ENCODE measurements at regions of chr22 and their contacts with region 1.

Region 1: GRCh38 chr22:18077639-18078328 is at the start of gene PEX26:
- DNase-seq: peak; percentile 85 to 96 (median 95)
- ATAC-seq: peak; percentile 99
- H3K4me3 ChIP-seq: peak within 1 kb of the TSS; percentile 96
- H3K4me3 Mint-ChIP-seq: peak within 1 kb of the TSS; percentile 94 to 100 (median 97)
- H3K27ac ChIP-seq: peak within 1 kb of the TSS; percentile 80
- H3K27ac Mint-ChIP-seq: peak within 1 kb of the TSS; percentile 93 to 99 (median 98)
- H3K4me1 ChIP-seq: peaks cover 19 to 27% of the 10 kb centered on the region in 2 donors
- H3K4me1 Mint-ChIP-seq: peaks cover 22 to 66% (median 61%) of the 10 kb centered on the region in 7 donors
- H3K27me3 ChIP-seq: no peaks in the 10 kb centered on the region
- H3K27me3 Mint-ChIP-seq: no peaks in the 10 kb centered on the region
- total RNA-seq, gene PEX26: 30.1 to 42.8 (median 35.5) TPM

Region 2: GRCh38 chr22:17084554-17085276 is 993.1 kb before region 1 on chr22 and contains the start of gene IL17RA:
- CTCF ChIA-PET with region 1: no interaction called
- POLR2A ChIA-PET with region 1: no interaction called
- intact Hi-C with region 1: loop called in 1 of 2 experiments (anchors 2 kb)
- DNase-seq: peak; percentile 90 to 97 (median 94)
- ATAC-seq: peak; percentile 97
- H3K4me3 ChIP-seq: peak within 1 kb of the TSS; percentile 59
- H3K4me3 Mint-ChIP-seq: peak within 1 kb of the TSS; percentile 87 to 99 (median 97)
- H3K27ac ChIP-seq: peak within 1 kb of the TSS; percentile 89
- H3K27ac Mint-ChIP-seq: peak within 1 kb of the TSS; percentile 88 to 98 (median 94)
- H3K4me1 ChIP-seq: peaks cover 28 to 41% of the 10 kb centered on the region in 2 donors
- H3K4me1 Mint-ChIP-seq: peaks cover 24 to 49% (median 36%) of the 10 kb centered on the region in 7 donors
- H3K27me3 ChIP-seq: no peaks in the 10 kb centered on the region
- H3K27me3 Mint-ChIP-seq: peaks cover 0 to 8% (median 0%) of the 10 kb centered on the region in 5 donors
- total RNA-seq, gene IL17RA: 51.9 to 91.8 (median 76.5) TPM

Region 3: DNA sequence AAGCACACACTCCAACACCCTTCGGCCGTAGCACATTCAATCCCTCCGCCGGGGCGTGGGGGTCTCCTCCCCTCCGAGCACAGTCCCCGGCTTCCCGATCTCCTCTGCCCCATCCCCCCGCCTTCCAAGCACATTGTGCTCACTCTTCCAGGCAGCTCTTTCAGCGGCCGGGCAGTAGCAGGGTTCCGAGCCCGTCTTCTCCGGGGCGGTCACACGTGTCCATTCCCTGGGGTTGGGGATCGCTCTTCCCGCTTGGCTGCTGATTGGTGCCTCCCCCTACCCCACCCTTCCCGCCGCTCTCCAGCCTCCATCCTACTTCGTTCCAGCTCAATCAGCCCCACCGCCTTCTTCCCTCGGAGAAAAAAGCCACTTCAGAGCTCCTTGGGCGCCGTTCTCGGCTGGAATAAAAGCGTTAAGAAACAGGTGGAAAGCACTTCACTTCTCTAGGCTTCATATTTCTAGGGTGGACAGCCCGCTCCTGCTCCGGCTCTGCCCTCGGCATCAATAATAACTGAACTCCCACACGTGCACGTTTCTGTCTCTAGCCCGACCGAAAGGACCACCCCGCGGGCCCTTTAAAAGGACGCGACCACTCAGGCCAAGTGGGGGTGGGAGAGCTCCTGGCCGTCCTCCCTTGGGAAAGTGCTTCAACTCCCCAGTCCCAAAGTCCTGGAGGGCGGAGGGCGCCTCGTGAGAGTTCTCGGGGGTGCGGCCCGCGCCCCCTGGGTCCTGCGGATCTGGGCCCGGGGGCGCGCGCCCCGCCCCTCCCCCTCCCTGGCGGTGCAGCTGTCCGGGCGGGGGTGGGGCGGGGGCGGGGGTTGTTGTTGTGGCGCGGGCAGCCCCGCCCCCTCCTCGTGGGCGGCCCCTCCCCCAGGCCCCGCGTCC is 709.0 kb before region 1 on chr22:
- CTCF ChIA-PET with region 1: no interaction called
- POLR2A ChIA-PET with region 1: no interaction called
- intact Hi-C with region 1: loop called in 1 of 2 experiments (anchors 5 kb)
- DNase-seq: peak in 3 of 9 donors; percentile 9 to 26 (median 16)
- ATAC-seq: peak; percentile 6
- H3K4me3 ChIP-seq: no peak overlapping the region
- H3K4me3 Mint-ChIP-seq: peak overlapping the region; percentile 75 to 86 (median 81)
- H3K27ac ChIP-seq: no peak overlapping the region
- H3K27ac Mint-ChIP-seq: peak overlapping the region in 2 of 9 donors; percentile 38 to 55
- H3K4me1 ChIP-seq: peaks cover 0 to 14% of the 10 kb centered on the region in 2 donors
- H3K4me1 Mint-ChIP-seq: peaks cover 13 to 35% (median 28%) of the 10 kb centered on the region in 7 donors
- H3K27me3 ChIP-seq: peaks cover 0 to 16% of the 10 kb centered on the region in 2 donors
- H3K27me3 Mint-ChIP-seq: peaks cover 53 to 68% (median 54%) of the 10 kb centered on the region in 5 donors

Region 4: GRCh38 chr22:17742527-17742902 is 335.3 kb before region 1 on chr22:
- CTCF ChIA-PET with region 1: interaction called, 15 read pairs
- POLR2A ChIA-PET with region 1: interaction called, 4 read pairs
- intact Hi-C with region 1: loop called (anchors 1 to 5 kb)
- DNase-seq: peak; percentile 32 to 72 (median 53)
- ATAC-seq: peak; percentile 86
- H3K4me3 ChIP-seq: no peak overlapping the region
- H3K4me3 Mint-ChIP-seq: no peak overlapping the region
- H3K27ac ChIP-seq: no peak overlapping the region
- H3K27ac Mint-ChIP-seq: peak overlapping the region in 3 of 9 donors; percentile 8 to 67 (median 9)
- H3K4me1 ChIP-seq: no peaks in the 10 kb centered on the region
- H3K4me1 Mint-ChIP-seq: peaks cover 3 to 11% (median 7%) of the 10 kb centered on the region in 7 donors
- H3K27me3 ChIP-seq: no peaks in the 10 kb centered on the region
- H3K27me3 Mint-ChIP-seq: no peaks in the 10 kb centered on the region

Region 5: DNA sequence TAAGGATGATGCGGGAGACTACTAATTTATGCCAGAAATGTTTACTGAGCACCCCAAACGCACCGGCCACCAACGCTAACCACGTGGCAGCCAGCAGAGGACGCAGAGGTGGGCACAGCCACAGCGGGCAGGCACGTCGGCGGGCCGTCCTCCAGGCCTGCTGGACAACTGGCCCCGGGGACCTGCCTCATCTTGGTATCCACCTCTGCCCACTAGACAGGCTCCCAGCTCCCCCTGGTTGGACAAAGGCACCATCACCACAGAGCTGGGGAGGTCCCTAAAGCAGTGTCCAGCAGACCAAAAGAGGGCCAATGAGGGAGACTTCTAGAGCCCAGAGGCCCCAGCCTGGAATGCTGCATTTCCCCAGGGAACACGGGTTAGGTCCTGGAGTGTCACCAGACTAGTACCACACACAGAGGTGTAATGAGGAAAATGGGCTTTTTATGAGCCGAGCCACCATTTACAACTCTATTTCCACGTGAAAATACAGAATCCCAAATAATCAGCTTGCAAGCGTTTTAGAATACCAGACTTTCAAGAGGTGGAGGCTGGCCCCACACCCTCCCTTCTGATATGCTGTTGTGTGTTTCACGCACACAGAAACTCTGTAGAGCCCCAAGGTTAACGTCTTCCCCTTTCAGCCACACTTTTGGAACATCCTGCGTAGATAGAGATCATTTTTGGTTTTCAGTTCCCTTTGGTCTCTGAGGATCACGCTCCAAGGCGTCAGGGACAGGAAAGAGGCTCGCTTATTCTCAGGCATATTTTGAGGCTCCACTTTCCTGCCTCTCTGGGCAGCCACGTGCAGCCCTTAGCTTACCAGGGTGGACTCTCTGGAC is 279.8 kb before region 1 on chr22:
- CTCF ChIA-PET with region 1: no interaction called
- POLR2A ChIA-PET with region 1: no interaction called
- intact Hi-C with region 1: no loop called
- DNase-seq: no peak
- ATAC-seq: peak; percentile 72
- H3K4me3 ChIP-seq: no peak overlapping the region
- H3K4me3 Mint-ChIP-seq: no peak overlapping the region
- H3K27ac ChIP-seq: no peak overlapping the region
- H3K27ac Mint-ChIP-seq: no peak overlapping the region
- H3K4me1 ChIP-seq: no peaks in the 10 kb centered on the region
- H3K4me1 Mint-ChIP-seq: peaks cover 0 to 5% (median 4%) of the 10 kb centered on the region in 7 donors
- H3K27me3 ChIP-seq: no peaks in the 10 kb centered on the region
- H3K27me3 Mint-ChIP-seq: no peaks in the 10 kb centered on the region

Region 6: DNA sequence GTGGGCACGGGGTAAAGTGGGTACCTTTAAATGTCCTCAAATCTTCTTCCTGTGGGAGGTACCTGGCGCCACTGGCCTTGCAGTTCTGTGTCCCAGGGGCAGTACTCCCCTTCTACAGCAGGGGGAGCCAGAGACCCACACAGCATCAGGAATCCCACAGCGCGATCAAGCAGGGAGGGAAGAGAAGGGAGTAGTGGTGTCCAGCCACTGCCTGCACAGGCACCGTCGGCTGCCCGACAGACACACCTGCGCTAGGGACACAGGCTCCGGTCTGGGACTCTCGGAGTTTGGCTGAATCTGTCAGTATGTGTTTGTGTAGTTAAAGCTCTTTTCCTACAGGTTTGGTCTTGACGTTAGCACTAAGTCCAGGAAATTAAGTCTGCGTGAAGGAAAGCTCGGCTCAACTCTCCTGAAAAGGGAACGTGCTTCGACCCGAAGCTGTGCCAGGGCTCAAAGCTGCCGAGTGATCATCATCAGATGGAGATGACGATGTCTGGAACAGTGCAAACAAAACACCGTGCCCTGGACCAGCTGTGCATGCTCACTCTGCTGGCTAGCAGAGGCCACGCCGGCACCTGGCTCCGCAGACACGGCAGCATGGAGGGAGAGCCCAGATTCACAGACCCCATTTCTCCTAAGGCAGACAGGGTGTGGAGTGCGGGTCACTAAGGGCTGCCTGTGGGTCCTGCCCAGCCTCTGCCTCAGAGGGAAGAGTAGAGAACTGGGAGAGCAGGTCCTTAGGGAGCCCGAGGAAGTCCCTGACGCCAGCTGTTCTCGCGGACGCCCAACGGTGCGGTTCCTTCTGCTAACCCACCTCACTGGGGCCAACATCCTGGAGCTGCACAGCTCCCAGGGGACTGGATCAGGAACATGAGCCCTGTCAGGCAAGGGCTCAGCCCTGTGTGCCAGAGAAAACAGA is 247.5 kb before region 1 on chr22:
- CTCF ChIA-PET with region 1: interaction called, 87 read pairs
- POLR2A ChIA-PET with region 1: interaction called, 18 read pairs
- intact Hi-C with region 1: loop called in 1 of 2 experiments (anchors 1 kb)
- DNase-seq: peak; percentile 59 to 87 (median 78)
- ATAC-seq: peak; percentile 94
- H3K4me3 ChIP-seq: no peak overlapping the region
- H3K4me3 Mint-ChIP-seq: no peak overlapping the region
- H3K27ac ChIP-seq: no peak overlapping the region
- H3K27ac Mint-ChIP-seq: peak overlapping the region in 2 of 9 donors; percentile 28 to 65
- H3K4me1 ChIP-seq: peaks cover 0 to 6% of the 10 kb centered on the region in 2 donors
- H3K4me1 Mint-ChIP-seq: peaks cover 0 to 10% (median 8%) of the 10 kb centered on the region in 7 donors
- H3K27me3 ChIP-seq: no peaks in the 10 kb centered on the region
- H3K27me3 Mint-ChIP-seq: no peaks in the 10 kb centered on the region

Region 7: DNA sequence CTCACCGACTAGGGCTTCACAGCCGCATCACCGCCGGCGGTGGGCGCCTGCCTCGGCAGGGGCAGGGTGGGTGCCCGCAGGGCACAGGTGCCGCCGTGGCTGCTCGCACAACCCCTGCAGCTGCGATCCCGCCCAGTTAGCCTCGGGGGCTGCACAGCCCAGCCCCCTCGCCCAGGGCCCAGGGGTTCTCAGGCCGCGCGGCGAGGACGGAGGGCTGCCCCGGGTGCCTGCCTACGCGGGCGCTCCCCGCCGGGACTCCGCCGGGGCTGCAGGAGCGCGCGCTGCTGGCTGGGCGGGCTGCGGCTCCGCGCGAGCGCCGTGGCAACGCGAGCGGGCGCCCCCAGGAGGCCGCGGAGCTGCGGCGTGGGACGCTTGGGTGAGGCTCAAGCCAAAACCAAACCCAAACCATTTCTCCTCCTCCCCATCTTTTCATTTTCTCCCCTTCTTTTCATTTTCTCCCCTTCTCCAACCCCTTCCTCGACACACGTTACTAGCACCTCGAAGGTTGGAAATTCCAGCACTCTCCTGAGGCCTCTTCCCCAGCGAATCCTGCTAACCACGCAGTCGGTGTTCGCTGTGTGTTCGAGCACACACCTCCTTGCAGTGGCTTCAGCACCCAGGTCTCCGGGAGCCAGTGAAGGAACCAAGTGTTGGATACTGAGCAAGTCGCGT is 53.4 kb before region 1 on chr22 and contains the start of gene MICAL3:
- CTCF ChIA-PET with region 1: no interaction called
- POLR2A ChIA-PET with region 1: no interaction called
- intact Hi-C with region 1: loop called (anchors 2 kb)
- DNase-seq: peak in 8 of 9 donors; percentile 22 to 79 (median 58)
- ATAC-seq: peak; percentile 95
- H3K4me3 ChIP-seq: peak within 1 kb of the TSS; percentile 57
- H3K4me3 Mint-ChIP-seq: peak within 1 kb of the TSS; percentile 76 to 95 (median 88)
- H3K27ac ChIP-seq: no peak within 1 kb of the TSS
- H3K27ac Mint-ChIP-seq: no peak within 1 kb of the TSS
- H3K4me1 ChIP-seq: peaks cover 0 to 4% of the 10 kb centered on the region in 2 donors
- H3K4me1 Mint-ChIP-seq: peaks cover 5 to 17% (median 10%) of the 10 kb centered on the region in 7 donors
- H3K27me3 ChIP-seq: no peaks in the 10 kb centered on the region
- H3K27me3 Mint-ChIP-seq: peaks cover 42 to 72% (median 49%) of the 10 kb centered on the region in 5 donors
- total RNA-seq, gene MICAL3: 10.0 to 43.9 (median 17.1) TPM

Region 8: GRCh38 chr22:19717691-19718455 is 1640.1 kb after region 1 on chr22:
- CTCF ChIA-PET with region 1: no interaction called
- POLR2A ChIA-PET with region 1: no interaction called
- intact Hi-C with region 1: loop called in 1 of 2 experiments (anchors 5 kb)
- DNase-seq: peak; percentile 68 to 93 (median 86)
- ATAC-seq: peak; percentile 97
- H3K4me3 ChIP-seq: peak overlapping the region; percentile 41
- H3K4me3 Mint-ChIP-seq: peak overlapping the region; percentile 72 to 88 (median 82)
- H3K27ac ChIP-seq: no peak overlapping the region
- H3K27ac Mint-ChIP-seq: peak overlapping the region in 3 of 9 donors; percentile 5 to 14 (median 9)
- H3K4me1 ChIP-seq: peaks cover 0 to 10% of the 10 kb centered on the region in 2 donors
- H3K4me1 Mint-ChIP-seq: peaks cover 0 to 10% (median 8%) of the 10 kb centered on the region in 7 donors
- H3K27me3 ChIP-seq: peaks cover 0 to 3% of the 10 kb centered on the region in 2 donors
- H3K27me3 Mint-ChIP-seq: peaks cover 28 to 59% (median 35%) of the 10 kb centered on the region in 5 donors

Measured in naive thymus-derived CD4-positive, alpha-beta T cell (primary cell).